Activated B cell treated with CpG ODN at 0.5 μM for 24 hours (primary cell): ENCODE measurements at regions of chr10 and their contacts with region 1.

Region 1: GRCh38 chr10:88932539-88933256 is 19.9 kb downstream of the ACTA2 start:
- DNase-seq: no peak
- ATAC-seq: peak; percentile 76
- H3K4me3 Mint-ChIP-seq: no peak overlapping the region
- H3K27ac Mint-ChIP-seq: peak overlapping the region; percentile 64
- H3K4me1 Mint-ChIP-seq: peaks cover 32% of the 10 kb centered on the region
- H3K27me3 Mint-ChIP-seq: no peaks in the 10 kb centered on the region
- CTCF ChIP-seq: peak; percentile 86

Region 2: DNA sequence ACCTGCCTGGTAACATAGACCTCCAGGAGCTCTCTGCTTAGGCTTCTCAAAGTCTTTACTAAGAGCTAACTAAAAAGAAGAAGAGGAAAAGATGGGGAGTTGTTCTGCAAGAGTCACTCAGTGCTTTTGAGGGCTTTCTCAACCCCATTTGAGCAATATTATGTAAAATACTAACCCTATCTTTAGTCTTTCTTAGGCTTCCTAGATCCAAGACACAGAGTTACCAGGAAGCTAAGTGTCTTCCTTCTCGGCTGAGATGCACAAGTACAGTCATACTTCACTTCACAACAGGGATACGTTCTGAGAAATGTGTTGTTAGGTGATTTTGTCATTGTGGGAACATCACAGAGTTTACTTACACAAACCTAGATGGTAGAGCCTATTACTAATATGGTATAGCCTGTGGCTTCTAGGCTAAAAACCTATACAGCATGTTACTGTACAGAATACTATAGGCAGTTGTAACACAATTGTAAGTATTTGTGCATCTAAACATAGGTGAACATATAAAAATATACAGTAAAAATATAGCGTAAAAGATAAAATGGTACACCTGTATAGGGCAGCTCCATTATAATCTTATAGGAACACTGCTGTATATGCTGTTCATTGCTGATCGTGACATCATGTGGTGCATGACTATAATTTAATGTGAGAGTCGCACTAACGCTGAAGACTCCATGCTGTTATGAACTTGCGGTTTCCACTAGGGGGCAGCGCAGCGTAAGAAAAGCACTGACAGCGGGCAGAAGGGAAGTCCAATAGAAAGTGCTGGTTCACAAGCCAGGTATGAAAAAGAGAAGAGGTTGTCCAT is 97.4 kb before region 1 on chr10:
- CTCF ChIA-PET with region 1: interaction called, 449 read pairs
- POLR2A ChIA-PET with region 1: interaction called, 10 read pairs
- intact Hi-C with region 1: loop called (anchors 1 kb)
- DNase-seq: peak; percentile 66
- ATAC-seq: peak; percentile 98
- H3K4me3 Mint-ChIP-seq: no peak overlapping the region
- H3K27ac Mint-ChIP-seq: no peak overlapping the region
- H3K4me1 Mint-ChIP-seq: peaks cover 2% of the 10 kb centered on the region
- H3K27me3 Mint-ChIP-seq: peaks cover 5% of the 10 kb centered on the region
- CTCF ChIP-seq: no peak

Region 3: GRCh38 chr10:88901206-88901983 is 31.3 kb before region 1 on chr10:
- CTCF ChIA-PET with region 1: interaction called, 44 read pairs
- POLR2A ChIA-PET with region 1: interaction called, 14 read pairs
- intact Hi-C with region 1: loop called (anchors 2 kb)
- DNase-seq: no peak
- ATAC-seq: peak; percentile 83
- H3K4me3 Mint-ChIP-seq: peak overlapping the region; percentile 65
- H3K27ac Mint-ChIP-seq: peak overlapping the region; percentile 98
- H3K4me1 Mint-ChIP-seq: peaks cover 65% of the 10 kb centered on the region
- H3K27me3 Mint-ChIP-seq: no peaks in the 10 kb centered on the region
- CTCF ChIP-seq: no peak

Region 4: DNA sequence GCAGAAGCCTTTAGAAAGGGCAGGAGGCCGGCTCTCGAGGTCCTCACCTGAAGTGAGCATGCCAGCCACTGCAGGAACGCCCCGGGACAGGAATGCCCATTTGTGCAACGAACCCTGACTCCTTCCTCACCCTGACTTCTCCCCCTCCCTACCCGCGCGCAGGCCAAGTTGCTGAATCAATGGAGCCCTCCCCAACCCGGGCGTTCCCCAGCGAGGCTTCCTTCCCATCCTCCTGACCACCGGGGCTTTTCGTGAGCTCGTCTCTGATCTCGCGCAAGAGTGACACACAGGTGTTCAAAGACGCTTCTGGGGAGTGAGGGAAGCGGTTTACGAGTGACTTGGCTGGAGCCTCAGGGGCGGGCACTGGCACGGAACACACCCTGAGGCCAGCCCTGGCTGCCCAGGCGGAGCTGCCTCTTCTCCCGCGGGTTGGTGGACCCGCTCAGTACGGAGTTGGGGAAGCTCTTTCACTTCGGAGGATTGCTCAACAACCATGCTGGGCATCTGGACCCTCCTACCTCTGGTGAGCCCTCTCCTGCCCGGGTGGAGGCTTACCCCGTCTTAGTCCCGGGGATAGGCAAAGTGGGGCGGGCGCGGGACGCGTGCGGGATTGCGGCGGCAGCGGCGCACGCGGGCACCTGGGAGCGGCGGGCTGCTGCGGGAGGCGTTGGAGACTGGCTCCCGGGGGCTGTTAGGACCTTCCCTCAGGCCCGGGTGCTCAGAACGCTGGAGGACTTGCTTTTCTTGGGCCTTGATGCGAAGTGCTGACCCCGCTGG is 57.9 kb after region 1 on chr10 and contains the start of gene FAS:
- CTCF ChIA-PET with region 1: interaction called, 22 read pairs
- POLR2A ChIA-PET with region 1: interaction called, 6 read pairs
- intact Hi-C with region 1: loop called (anchors 1 kb)
- DNase-seq: peak; percentile 56
- ATAC-seq: peak; percentile 75
- H3K4me3 Mint-ChIP-seq: peak within 1 kb of the TSS; percentile 95
- H3K27ac Mint-ChIP-seq: peak within 1 kb of the TSS; percentile 88
- H3K4me1 Mint-ChIP-seq: peaks cover 53% of the 10 kb centered on the region
- H3K27me3 Mint-ChIP-seq: no peaks in the 10 kb centered on the region
- CTCF ChIP-seq: no peak
- total RNA-seq, gene FAS: 18.2 and 22.6 TPM in 2 replicates

Region 5: DNA sequence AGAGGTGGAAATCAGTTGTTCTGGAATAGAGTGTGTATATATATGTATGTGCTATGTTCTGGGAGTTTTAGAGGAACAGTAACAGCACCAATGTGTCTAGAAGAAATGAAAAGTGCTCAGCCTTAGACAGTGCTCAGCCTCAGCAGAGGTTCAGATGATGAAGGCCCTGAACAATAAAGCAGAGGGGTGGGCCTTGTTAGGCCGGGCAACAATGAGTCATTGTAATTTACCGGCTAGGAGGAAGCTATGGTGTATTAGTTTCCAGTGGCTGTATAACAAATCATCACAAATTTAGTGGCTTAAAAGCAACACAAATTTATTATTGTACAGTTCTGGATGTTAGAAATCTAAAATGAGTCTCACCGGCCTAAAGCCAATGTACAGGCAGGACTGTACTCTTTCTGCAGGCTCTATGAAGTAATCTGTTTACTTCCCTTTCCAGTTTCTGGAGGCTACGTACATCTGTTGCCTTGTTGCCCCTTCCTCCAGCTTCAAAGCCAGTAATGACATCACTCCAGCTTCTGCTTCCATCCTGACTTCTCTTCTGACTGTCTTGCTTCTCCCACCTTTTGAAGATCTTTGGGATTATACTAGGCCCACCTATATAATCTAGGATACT is 189.8 kb after region 1 on chr10:
- CTCF ChIA-PET with region 1: no interaction called
- POLR2A ChIA-PET with region 1: no interaction called
- intact Hi-C with region 1: no loop called
- DNase-seq: no peak
- ATAC-seq: no peak
- H3K4me3 Mint-ChIP-seq: no peak overlapping the region
- H3K27ac Mint-ChIP-seq: no peak overlapping the region
- H3K4me1 Mint-ChIP-seq: peaks cover 9% of the 10 kb centered on the region
- H3K27me3 Mint-ChIP-seq: peaks cover 9% of the 10 kb centered on the region
- CTCF ChIP-seq: no peak

Region 6: GRCh38 chr10:89207181-89207800 is 274.6 kb after region 1 on chr10 and contains the start of gene CH25H:
- CTCF ChIA-PET with region 1: interaction called, 18 read pairs
- POLR2A ChIA-PET with region 1: no interaction called
- intact Hi-C with region 1: no loop called
- DNase-seq: no peak
- ATAC-seq: peak; percentile 65
- H3K4me3 Mint-ChIP-seq: peak within 1 kb of the TSS; percentile 83
- H3K27ac Mint-ChIP-seq: no peak within 1 kb of the TSS
- H3K4me1 Mint-ChIP-seq: peaks cover 27% of the 10 kb centered on the region
- H3K27me3 Mint-ChIP-seq: peaks cover 47% of the 10 kb centered on the region
- CTCF ChIP-seq: no peak
- total RNA-seq, gene CH25H: not detected in 2 replicates

Region 7: DNA sequence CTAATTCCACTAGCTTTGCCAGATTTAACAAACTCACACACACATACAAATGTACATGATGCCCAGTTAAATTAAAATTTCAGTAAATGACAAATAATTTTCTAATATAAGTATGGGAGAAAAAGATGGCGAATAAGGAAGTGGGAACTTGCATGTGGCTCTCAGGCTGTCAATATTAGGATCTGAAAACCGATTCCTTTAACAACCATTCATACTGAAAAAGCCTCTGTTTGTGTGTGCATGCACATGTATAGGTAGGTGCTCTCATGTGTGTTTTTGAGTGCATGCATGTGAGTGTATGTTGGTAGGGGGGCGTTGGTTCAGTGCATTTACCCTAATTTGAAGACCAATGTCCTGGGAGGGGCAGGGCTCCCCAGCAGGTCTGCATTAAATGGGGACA is 1799.9 kb after region 1 on chr10:
- CTCF ChIA-PET with region 1: no interaction called
- POLR2A ChIA-PET with region 1: no interaction called
- intact Hi-C with region 1: no loop called
- DNase-seq: no peak
- ATAC-seq: no peak
- H3K4me3 Mint-ChIP-seq: no peak overlapping the region
- H3K27ac Mint-ChIP-seq: no peak overlapping the region
- H3K4me1 Mint-ChIP-seq: no peaks in the 10 kb centered on the region
- H3K27me3 Mint-ChIP-seq: peaks cover 3% of the 10 kb centered on the region
- CTCF ChIP-seq: no peak